ENCODE measurements at regions of chr12 and their contacts with region 1.

Region 1: DNA sequence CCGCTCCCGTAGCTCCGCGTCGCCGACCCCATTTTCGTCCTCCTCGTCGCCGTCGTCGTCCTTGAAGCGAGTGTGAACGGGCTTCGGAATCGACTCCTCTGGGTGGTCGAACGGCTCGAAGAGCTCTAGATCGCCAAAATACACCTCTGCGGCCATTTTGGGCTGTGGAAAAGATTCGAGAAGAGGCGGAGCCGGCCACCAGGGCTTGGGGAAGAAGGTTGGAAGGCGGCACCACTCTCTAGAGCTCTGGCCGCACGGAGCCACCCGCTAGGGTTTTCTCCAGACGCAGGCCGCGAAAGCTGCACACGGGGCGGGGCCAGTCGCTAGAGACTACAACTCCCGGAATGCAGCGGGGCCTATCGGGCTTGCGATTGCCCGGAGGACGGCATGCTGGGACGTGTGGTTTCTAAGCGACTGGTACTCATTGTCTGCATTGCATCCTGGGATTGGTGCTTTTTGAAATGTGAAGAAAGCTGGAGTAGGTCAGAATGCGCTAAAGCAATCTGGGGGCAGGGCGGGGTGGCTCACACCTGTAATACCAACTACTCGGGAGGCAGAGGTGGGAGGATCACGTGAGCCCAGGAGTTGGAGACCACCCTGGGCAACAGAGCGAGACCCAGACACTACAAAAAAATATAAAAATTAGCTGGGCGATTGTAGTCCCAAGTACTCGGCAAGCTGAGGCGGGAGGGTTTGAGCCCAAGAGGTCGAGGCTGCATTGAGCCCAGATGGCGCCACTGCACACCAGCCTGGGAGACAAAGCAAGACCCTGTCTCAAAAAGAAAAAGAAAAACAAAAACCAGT is at the start of gene ZCCHC8:
- DNase-seq: peak; percentile 89
- ATAC-seq: peak; percentile 92
- H3K4me3 Mint-ChIP-seq: peak within 1 kb of the TSS; percentile 97
- H3K27ac Mint-ChIP-seq: peak within 1 kb of the TSS; percentile 97
- H3K4me1 Mint-ChIP-seq: peaks cover 44% of the 10 kb centered on the region
- H3K27me3 Mint-ChIP-seq: no peaks in the 10 kb centered on the region
- CTCF ChIP-seq: no peak
- total RNA-seq, gene ZCCHC8: 39.8 and 48.0 TPM in 2 replicates

Region 2: DNA sequence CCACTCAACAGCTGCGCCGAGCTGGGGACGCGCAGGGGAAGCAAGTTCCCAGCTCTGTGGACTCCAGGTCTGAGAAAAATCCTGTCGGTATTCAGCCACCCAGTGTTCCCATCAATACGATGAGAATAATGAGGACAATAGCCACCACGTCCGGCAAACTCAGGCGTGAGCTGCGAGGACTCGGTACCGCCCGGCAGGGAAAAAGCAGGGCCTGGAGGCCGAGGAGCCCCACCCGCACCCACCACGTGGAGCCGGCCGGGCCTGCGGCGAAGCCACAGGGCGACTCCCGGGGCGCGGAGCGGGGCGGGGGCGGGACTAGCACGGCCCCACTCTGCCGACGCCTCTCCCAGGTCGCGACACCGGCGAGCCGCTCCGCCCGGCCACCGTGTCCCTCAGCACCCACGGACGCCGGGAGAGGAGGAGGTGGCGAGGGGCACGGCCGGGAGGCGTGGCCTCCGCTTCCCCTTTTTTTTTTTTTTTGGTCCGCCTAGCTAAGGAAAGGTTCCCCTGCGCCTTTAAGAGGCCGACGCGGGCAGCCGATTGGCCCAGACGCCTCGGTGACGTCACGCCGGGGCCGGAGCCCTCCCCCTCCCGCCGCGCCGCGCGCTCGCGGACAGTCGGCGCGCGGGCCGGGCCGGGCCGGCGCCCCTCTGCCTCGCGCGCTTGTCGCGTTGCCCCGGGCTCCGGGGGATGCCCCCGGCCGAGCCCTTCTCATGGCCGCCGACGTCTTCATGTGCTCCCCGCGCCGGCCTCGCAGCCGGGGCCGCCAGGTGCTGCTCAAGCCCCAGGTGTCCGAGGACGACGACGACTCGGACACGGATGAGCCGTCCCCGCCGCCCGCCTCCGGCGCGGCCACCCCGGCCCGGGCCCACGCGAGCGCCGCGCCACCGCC is 422.5 kb before region 1 on chr12 and contains the start of gene MLXIP:
- CTCF ChIA-PET with region 1: no interaction called
- POLR2A ChIA-PET with region 1: no interaction called
- intact Hi-C with region 1: loop called (anchors 2 kb)
- DNase-seq: peak; percentile 89
- ATAC-seq: peak; percentile 80
- H3K4me3 Mint-ChIP-seq: peak within 1 kb of the TSS; percentile 86
- H3K27ac Mint-ChIP-seq: peak within 1 kb of the TSS; percentile 74
- H3K4me1 Mint-ChIP-seq: peaks cover 66% of the 10 kb centered on the region
- H3K27me3 Mint-ChIP-seq: no peaks in the 10 kb centered on the region
- CTCF ChIP-seq: no peak
- total RNA-seq, gene MLXIP: 26.7 and 33.7 TPM in 2 replicates

Region 3: DNA sequence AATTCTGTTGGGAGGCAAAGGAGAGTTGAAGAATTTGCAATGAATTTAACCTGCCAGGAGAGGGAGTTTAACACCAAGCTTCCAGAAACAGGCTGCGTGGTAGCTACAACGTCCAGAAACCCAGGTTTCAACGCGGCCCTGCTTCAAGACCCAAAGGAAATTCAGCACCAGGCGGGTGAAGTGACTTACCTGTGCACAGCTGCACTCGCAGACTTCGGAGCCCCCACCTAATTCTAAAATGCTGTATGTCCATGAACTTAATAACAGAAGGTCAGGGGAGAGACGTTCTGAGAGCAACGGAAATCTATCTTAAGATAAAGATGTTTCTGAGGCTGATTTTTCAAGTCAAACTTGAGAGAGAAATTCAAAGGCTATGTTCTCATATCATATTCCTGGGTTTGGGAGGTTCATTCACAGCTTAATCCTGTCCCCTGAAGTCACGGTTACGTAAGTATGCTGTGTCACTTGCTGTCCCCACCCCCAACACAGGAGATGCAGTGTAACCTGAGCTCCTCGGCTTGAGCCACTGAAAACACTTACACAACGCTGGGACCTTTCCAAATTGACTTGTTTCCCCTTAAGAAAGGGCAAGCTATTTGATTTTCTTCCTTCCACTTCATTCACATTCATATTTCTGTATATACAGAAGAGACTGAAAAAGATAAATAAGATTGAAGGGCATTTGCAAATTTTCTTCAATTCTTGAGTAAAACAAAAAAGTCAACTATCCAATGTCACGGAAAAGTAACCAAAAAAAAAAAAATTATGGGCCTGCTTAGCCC is 101.1 kb before region 1 on chr12:
- CTCF ChIA-PET with region 1: interaction called, 11 read pairs
- POLR2A ChIA-PET with region 1: interaction called, 26 read pairs
- intact Hi-C with region 1: no loop called
- DNase-seq: peak; percentile 26
- ATAC-seq: peak; percentile 51
- H3K4me3 Mint-ChIP-seq: peak overlapping the region; percentile 44
- H3K27ac Mint-ChIP-seq: peak overlapping the region; percentile 75
- H3K4me1 Mint-ChIP-seq: peaks cover 38% of the 10 kb centered on the region
- H3K27me3 Mint-ChIP-seq: no peaks in the 10 kb centered on the region
- CTCF ChIP-seq: peak; percentile 47

Region 4: GRCh38 chr12:122449353-122449752 is 51.5 kb before region 1 on chr12:
- CTCF ChIA-PET with region 1: no interaction called
- POLR2A ChIA-PET with region 1: no interaction called
- intact Hi-C with region 1: loop called (anchors 2 kb)
- DNase-seq: no peak
- ATAC-seq: no peak
- H3K4me3 Mint-ChIP-seq: no peak overlapping the region
- H3K27ac Mint-ChIP-seq: no peak overlapping the region
- H3K4me1 Mint-ChIP-seq: peaks cover 17% of the 10 kb centered on the region
- H3K27me3 Mint-ChIP-seq: no peaks in the 10 kb centered on the region
- CTCF ChIP-seq: no peak

Region 5: DNA sequence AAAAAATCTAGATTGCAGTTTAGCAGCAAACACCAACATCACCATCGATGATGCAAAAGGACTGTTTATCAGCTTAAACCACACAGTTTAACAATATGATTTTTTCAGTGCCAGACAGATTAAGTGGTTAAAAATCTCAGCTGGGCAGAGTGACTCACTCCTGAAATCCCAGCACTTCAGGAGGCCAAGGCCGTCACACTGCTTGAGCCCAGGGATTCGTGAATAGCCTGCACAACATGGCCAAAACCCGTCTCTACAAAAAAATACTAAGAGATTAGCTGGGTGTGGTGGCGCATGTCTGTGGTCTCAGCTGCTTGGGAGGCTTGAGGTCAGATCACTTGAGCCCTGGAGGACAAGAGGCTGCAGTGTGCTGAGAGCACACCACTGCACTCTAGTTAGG is 17.0 kb after region 1 on chr12:
- CTCF ChIA-PET with region 1: interaction called, 4 read pairs
- POLR2A ChIA-PET with region 1: interaction called, 202 read pairs
- intact Hi-C with region 1: no loop called
- DNase-seq: no peak
- ATAC-seq: no peak
- H3K4me3 Mint-ChIP-seq: no peak overlapping the region
- H3K27ac Mint-ChIP-seq: no peak overlapping the region
- H3K4me1 Mint-ChIP-seq: peaks cover 16% of the 10 kb centered on the region
- H3K27me3 Mint-ChIP-seq: no peaks in the 10 kb centered on the region
- CTCF ChIP-seq: no peak

Region 6: GRCh38 chr12:122593910-122594309 is 93.0 kb after region 1 on chr12:
- CTCF ChIA-PET with region 1: no interaction called
- POLR2A ChIA-PET with region 1: no interaction called
- intact Hi-C with region 1: no loop called
- DNase-seq: no peak
- ATAC-seq: no peak
- H3K4me3 Mint-ChIP-seq: no peak overlapping the region
- H3K27ac Mint-ChIP-seq: no peak overlapping the region
- H3K4me1 Mint-ChIP-seq: no peaks in the 10 kb centered on the region
- H3K27me3 Mint-ChIP-seq: no peaks in the 10 kb centered on the region
- CTCF ChIP-seq: no peak

Region 7: GRCh38 chr12:122646517-122647217 is 145.8 kb after region 1 on chr12:
- CTCF ChIA-PET with region 1: no interaction called
- POLR2A ChIA-PET with region 1: no interaction called
- intact Hi-C with region 1: loop called (anchors 1 kb)
- DNase-seq: peak; percentile 21
- ATAC-seq: peak; percentile 84
- H3K4me3 Mint-ChIP-seq: peak overlapping the region; percentile 80
- H3K27ac Mint-ChIP-seq: peak overlapping the region; percentile 91
- H3K4me1 Mint-ChIP-seq: peaks cover 19% of the 10 kb centered on the region
- H3K27me3 Mint-ChIP-seq: no peaks in the 10 kb centered on the region
- CTCF ChIP-seq: no peak

Region 8: GRCh38 chr12:122752464-122753318 is 251.8 kb after region 1 on chr12 and contains the start of gene DENR:
- CTCF ChIA-PET with region 1: no interaction called
- POLR2A ChIA-PET with region 1: interaction called, 8 read pairs
- intact Hi-C with region 1: loop called (anchors 1 kb)
- DNase-seq: peak; percentile 99
- ATAC-seq: peak; percentile 92
- H3K4me3 Mint-ChIP-seq: peak within 1 kb of the TSS; percentile 91
- H3K27ac Mint-ChIP-seq: peak within 1 kb of the TSS; percentile 92
- H3K4me1 Mint-ChIP-seq: peaks cover 46% of the 10 kb centered on the region
- H3K27me3 Mint-ChIP-seq: no peaks in the 10 kb centered on the region
- CTCF ChIP-seq: no peak
- total RNA-seq, gene DENR: 50.5 and 53.3 TPM in 2 replicates